GM10248 (cell line): ENCODE measurements at regions of chr19 and their contacts with region 1.

Region 1: DNA sequence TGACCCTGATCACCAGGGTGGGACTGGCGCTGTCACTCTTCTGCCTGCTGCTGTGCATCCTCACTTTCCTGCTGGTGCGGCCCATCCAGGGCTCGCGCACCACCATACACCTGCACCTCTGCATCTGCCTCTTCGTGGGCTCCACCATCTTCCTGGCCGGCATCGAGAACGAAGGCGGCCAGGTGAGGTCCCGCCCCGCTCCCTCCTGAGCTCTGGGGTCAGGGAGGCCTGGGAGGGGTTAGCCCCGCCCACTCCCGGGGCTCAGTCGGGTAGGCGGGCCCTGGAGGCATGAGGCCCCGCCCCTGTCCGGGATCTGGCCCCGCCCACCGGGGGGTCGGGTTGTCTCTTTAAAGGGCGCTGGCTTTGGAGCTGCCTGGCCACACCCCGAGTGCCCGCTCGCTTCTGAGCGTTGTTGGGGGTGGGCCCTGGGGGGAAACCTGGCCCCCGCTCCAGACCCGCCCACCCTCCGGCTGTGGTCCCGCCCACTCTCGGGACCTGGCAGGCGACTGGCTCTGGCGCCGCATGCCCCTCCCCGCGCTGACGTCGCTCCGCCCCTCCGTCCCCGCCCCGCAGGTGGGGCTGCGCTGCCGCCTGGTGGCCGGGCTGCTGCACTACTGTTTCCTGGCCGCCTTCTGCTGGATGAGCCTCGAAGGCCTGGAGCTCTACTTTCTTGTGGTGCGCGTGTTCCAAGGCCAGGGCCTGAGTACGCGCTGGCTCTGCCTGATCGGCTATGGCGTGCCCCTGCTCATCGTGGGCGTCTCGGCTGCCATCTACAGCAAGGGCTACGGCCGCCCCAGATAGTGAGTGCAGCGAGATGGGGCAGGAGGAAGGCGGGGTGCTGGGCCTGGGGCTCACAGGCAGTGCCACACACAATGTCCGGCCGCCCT is 13.1 kb downstream of the DDX39A start:
- DNase-seq: peak; percentile 98
- CTCF ChIP-seq: peak; percentile 91

Region 2: GRCh38 chr19:14167576-14168138 is 238.3 kb before region 1 on chr19:
- CTCF ChIA-PET with region 1: no interaction called
- POLR2A ChIA-PET with region 1: no interaction called
- DNase-seq: no peak
- CTCF ChIP-seq: no peak

Region 3: GRCh38 chr19:14366498-14366915 is 39.5 kb before region 1 on chr19:
- CTCF ChIA-PET with region 1: interaction called, 17 read pairs
- POLR2A ChIA-PET with region 1: no interaction called
- DNase-seq: peak; percentile 65
- CTCF ChIP-seq: no peak

Region 4: DNA sequence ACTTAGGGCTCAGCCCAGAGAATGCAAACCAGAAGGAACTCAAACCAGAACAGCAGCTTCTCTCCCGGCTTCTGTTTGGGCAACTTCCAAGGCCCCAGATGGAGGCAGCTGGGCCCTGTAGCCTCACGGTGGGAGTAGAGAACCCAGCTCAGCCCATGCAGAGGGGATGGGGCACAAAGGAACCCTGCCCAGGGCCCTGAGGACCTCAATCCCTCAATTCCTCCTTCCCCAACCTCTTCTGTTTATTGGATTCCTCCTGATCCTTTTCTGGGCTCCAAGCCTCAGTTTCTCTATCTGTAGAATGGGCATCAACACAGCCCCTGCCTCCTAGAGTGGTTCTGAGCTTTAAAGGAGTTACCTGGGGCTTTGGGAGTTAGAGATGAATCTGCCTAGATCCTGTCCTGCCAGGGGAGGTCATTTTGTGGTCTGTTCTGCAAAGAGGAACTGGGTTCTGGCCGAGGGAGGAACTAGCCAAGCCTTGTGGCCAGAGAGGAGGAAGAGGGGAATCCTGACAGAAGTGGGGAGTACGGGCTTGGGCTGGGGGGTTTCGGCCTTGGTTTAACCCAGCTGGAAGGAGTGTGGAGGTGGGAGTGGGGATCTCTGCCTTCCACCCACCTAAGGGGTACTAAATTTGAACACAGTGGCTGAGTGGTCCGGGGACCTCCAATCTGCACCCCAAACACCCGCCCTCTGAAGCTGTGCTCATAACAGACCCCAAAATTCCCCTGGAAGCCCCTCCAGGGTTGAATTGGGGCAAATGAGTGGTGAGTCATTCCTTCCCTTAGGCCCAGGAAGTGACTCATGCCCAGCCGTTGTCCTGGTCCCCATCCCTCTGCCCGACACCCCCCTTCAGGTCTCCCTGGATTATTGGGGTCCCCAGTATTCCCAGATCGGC is 22.1 kb before region 1 on chr19:
- CTCF ChIA-PET with region 1: interaction called, 13 read pairs
- POLR2A ChIA-PET with region 1: interaction called, 7 read pairs
- DNase-seq: peak; percentile 70
- CTCF ChIP-seq: no peak

Region 5: DNA sequence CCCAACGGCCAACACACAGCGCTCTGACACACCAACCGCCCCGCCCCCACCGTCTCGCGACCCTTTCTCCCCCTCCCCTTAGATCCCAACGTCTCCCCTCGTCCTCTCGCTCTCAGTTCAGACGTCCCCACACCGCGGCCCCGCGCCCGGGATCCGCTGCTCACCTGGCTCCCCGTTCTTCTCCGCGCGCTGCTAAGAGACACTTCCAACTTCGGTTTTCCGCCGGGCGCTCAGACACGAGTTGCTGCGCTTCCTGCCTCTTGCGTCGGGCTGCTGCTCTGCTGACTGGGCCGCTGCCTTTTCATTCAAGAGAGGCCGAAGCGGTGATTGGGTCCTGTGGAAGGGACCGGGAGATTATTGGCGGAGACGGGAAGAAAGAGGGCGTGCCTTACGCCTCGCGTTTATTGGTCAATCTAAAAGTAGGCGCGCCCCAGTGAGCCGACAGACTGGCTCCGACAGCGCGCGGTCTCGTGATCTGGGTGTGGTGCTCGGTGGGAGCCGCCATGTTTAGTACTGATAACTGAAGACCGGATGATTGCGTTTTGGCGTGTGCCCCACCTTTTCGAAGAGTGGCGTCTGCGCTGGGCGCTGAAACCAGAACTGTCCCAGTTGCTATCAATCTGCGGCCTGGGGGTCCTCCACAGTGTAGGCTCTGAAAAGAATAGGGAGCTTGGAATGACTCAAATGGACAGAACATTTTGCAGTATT is 13.3 kb after region 1 on chr19 and contains the start of gene DDX39A:
- CTCF ChIA-PET with region 1: interaction called, 11 read pairs
- POLR2A ChIA-PET with region 1: interaction called, 7 read pairs
- DNase-seq: peak; percentile 97
- CTCF ChIP-seq: no peak

Region 6: DNA sequence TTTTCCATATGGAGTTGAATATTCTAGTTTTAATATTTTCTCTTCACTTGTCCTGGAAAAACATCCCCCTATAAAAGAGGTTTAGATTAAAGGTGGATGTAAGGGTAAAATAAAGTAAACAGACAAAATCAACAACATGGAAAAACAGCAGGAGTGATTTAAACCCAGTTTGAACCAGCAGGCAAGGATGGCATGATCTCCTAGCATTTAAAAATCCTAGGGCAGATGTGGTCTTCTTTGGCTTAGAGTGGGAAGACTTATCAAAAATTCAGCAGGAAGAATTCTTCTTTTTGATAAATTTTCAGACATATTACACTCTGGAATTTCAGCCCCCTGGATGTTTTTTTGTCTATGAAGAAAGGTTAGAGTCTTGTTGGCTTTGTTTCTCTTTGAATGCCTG is 213.4 kb after region 1 on chr19:
- CTCF ChIA-PET with region 1: no interaction called
- POLR2A ChIA-PET with region 1: no interaction called
- DNase-seq: no peak
- CTCF ChIP-seq: no peak